A549 (cell line): ENCODE measurements at regions of chr14 and their contacts with region 1.

Region 1: GRCh38 chr14:35215110-35215876 is 76.9 kb upstream of the PSMA6 start:
- DNase-seq: peak; percentile 36 to 69
- ATAC-seq: peak; percentile 66 to 88; a peak in 4 of 6 replicates
- H3K4me3 ChIP-seq: no peak overlapping the region
- H3K27ac ChIP-seq: peak overlapping the region; percentile 69 to 75; a peak in 5 of 6 replicates
- H3K4me1 ChIP-seq: peaks cover 33% of the 10 kb centered on the region
- CTCF ChIP-seq: peak; percentile 73
- EP300 ChIP-seq: no peak
- POLR2A ChIP-seq: no peak
- RAD21 ChIP-seq: peak; percentile 77 to 81

Region 2: DNA sequence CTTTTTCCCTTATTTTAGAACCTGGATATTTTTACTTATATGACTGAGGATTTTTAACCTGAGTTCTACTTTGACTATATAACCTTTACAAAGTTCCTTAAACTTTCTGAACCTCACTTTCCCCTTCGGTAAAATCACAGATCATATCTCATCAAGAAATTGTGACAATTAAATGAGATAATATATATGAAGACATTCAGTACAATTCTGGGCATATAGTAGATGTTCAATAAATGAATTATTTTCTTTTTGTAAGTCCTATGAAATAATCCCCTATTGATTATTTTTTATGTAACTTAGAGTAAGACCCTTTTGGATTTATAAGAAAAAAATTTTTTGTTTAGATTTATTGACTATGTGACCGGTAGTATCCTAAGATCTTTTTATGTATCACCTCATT is 186.9 kb before region 1 on chr14:
- CTCF ChIA-PET with region 1: no interaction called
- POLR2A ChIA-PET with region 1: no interaction called
- DNase-seq: no peak
- ATAC-seq: no peak
- H3K4me3 ChIP-seq: no peak overlapping the region
- H3K27ac ChIP-seq: no peak overlapping the region
- H3K4me1 ChIP-seq: no peaks in the 10 kb centered on the region
- CTCF ChIP-seq: no peak
- EP300 ChIP-seq: no peak
- POLR2A ChIP-seq: no peak
- RAD21 ChIP-seq: no peak

Region 3: DNA sequence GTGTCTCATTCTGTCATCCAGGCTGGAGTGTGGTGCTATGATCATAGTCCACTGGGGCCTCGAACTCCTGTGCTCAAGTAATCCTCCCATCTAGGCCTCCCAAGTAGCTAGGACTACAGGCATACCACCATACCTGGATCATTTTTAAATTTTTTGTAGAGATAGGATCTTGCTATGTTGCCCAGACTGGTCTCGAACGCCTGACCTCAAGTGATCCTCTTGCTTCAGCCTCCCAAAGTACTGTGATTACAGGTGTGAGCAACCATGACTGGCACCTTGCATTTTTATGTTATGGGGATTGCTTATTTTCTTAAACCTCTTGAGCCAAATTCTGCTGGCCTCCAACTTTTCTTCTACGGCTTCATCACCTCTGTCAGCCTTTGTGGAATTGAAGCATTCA is 66.1 kb before region 1 on chr14:
- CTCF ChIA-PET with region 1: interaction called, 5 read pairs
- POLR2A ChIA-PET with region 1: interaction called, 14 read pairs
- DNase-seq: no peak
- ATAC-seq: no peak
- H3K4me3 ChIP-seq: no peak overlapping the region
- H3K27ac ChIP-seq: no peak overlapping the region
- H3K4me1 ChIP-seq: no peaks in the 10 kb centered on the region
- CTCF ChIP-seq: no peak
- EP300 ChIP-seq: no peak
- POLR2A ChIP-seq: no peak
- RAD21 ChIP-seq: no peak

Region 4: GRCh38 chr14:35201066-35201465 is 14.2 kb before region 1 on chr14:
- CTCF ChIA-PET with region 1: interaction called, 13 read pairs
- POLR2A ChIA-PET with region 1: no interaction called
- DNase-seq: no peak
- ATAC-seq: no peak
- H3K4me3 ChIP-seq: no peak overlapping the region
- H3K27ac ChIP-seq: no peak overlapping the region
- H3K4me1 ChIP-seq: peaks cover 14% of the 10 kb centered on the region
- CTCF ChIP-seq: no peak
- EP300 ChIP-seq: no peak
- POLR2A ChIP-seq: no peak
- RAD21 ChIP-seq: no peak

Region 5: GRCh38 chr14:35247777-35248475 is 32.6 kb after region 1 on chr14:
- CTCF ChIA-PET with region 1: no interaction called
- POLR2A ChIA-PET with region 1: no interaction called
- DNase-seq: no peak
- ATAC-seq: no peak
- H3K4me3 ChIP-seq: no peak overlapping the region
- H3K27ac ChIP-seq: no peak overlapping the region
- H3K4me1 ChIP-seq: no peaks in the 10 kb centered on the region
- CTCF ChIP-seq: no peak
- EP300 ChIP-seq: no peak
- POLR2A ChIP-seq: no peak
- RAD21 ChIP-seq: no peak